ENCODE measurements at regions of chr4 and their contacts with region 1.

Region 1: GRCh38 chr4:674172-675035 is at the starts of genes ATP5ME and MYL5:
- DNase-seq: peak; percentile 97
- H3K4me3 Mint-ChIP-seq: peak within 1 kb of the TSS; percentile 88
- H3K27ac Mint-ChIP-seq: peak within 1 kb of the TSS; percentile 90
- H3K4me1 Mint-ChIP-seq: peaks cover 7% of the 10 kb centered on the region
- H3K27me3 Mint-ChIP-seq: peaks cover 1% of the 10 kb centered on the region
- total RNA-seq, gene ATP5ME: 217 and 224 TPM in 2 replicates
- total RNA-seq, gene MYL5: 29.7 and 35.0 TPM in 2 replicates

Region 2: DNA sequence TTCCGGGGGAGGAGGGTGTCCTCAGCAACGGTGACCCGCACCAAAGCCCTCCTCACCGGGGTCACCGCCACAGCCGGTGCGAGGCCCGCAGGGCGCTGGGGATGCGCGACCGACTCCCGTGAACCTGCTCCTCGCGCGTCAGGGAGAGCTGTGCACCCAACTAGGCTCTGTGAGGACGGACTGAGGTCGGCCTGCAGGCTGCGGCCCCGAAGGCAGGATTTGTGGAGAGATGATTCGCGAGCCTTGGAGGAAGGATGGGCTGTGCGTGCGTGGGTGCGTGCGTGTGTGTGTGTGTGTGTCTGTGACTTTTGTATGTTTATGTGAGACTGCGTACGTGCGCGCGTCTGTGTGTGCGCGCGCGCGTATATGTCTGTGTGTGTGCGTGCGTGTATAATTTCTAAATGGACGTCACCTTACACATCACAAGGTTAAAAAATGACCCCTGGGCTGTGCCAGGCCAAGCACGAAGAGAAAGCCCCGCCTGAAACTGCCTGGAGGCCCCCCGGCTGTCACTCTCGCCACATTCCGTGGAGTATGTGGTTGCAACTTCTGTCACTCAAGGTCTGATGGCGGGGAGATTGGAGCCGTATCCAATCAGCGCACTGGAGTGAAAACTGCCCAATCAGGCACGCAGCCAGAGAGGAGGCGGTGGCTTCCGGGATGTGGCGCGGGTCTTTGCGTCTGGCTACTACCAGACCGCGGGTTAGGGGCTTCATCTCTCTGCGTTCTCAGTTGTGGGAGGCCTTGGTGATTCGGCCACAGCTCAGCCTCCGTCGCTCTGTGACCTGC is 337.1 kb before region 1 on chr4 and contains the start of gene ZNF141:
- intact Hi-C with region 1: loop called (anchors 1 kb)
- DNase-seq: peak; percentile 90
- H3K4me3 Mint-ChIP-seq: peak within 1 kb of the TSS; percentile 99
- H3K27ac Mint-ChIP-seq: peak within 1 kb of the TSS; percentile 98
- H3K4me1 Mint-ChIP-seq: peaks cover 25% of the 10 kb centered on the region
- H3K27me3 Mint-ChIP-seq: peaks cover 3% of the 10 kb centered on the region
- total RNA-seq, gene ZNF141: 23.4 and 23.7 TPM in 2 replicates

Region 3: GRCh38 chr4:602559-602942 is 71.9 kb before region 1 on chr4:
- intact Hi-C with region 1: loop called (anchors 1 kb)
- DNase-seq: peak; percentile 23
- H3K4me3 Mint-ChIP-seq: no peak overlapping the region
- H3K27ac Mint-ChIP-seq: no peak overlapping the region
- H3K4me1 Mint-ChIP-seq: peaks cover 7% of the 10 kb centered on the region
- H3K27me3 Mint-ChIP-seq: peaks cover 3% of the 10 kb centered on the region

Region 4: DNA sequence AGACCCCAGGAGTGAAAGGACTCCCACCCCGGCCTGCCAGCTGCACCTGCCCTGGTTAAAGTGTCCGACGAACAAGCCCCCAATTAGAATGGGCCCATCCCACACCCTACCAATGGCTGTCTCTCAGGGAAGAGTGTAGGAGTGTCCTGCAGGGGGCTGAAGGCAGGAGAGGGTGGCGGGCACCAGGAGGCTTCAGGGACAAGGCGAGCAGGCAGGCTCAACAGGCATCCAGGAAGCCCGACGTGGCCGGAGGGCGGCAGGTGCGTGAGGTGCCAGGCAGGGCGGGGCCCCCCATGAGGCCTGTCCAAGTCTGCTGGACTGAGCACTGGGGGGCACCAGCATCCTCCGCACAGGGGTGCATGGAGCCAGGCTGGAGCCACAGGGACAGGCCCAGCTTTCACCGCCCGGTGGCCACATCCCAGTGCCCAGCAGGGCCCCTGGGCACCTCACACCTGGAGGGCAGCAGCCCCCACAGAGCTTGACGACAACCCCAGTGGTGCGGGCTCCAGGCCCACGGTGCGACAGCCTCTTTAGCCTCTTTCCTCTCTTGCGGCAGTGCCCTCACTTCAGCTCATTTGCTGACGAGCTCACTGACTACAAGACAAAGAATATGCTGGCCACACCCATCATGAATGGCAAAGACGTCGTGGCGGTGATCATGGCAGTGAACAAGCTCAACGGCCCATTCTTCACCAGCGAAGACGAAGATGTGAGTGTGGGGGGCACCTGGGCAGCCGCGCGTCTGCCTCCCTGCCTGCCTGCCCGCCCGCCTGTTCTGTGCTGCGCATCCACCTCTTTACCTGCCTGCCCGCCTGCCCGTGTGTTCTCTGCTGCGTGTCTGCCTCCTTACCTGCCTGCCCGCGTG is 40.1 kb before region 1 on chr4:
- intact Hi-C with region 1: no loop called
- DNase-seq: no peak
- H3K4me3 Mint-ChIP-seq: no peak overlapping the region
- H3K27ac Mint-ChIP-seq: no peak overlapping the region
- H3K4me1 Mint-ChIP-seq: no peaks in the 10 kb centered on the region
- H3K27me3 Mint-ChIP-seq: no peaks in the 10 kb centered on the region

Region 5: GRCh38 chr4:705278-706082 is 31.1 kb after region 1 on chr4 and contains the start of gene PCGF3:
- intact Hi-C with region 1: loop called (anchors 1 kb)
- DNase-seq: peak; percentile 95
- H3K4me3 Mint-ChIP-seq: peak within 1 kb of the TSS; percentile 83
- H3K27ac Mint-ChIP-seq: peak within 1 kb of the TSS; percentile 83
- H3K4me1 Mint-ChIP-seq: peaks cover 27% of the 10 kb centered on the region
- H3K27me3 Mint-ChIP-seq: peaks cover 2% of the 10 kb centered on the region
- total RNA-seq, gene PCGF3: 30.4 and 31.0 TPM in 2 replicates

Measured in activated T-helper 1 cell treated with anti-CD3 and anti-CD28 coated beads, Interleukin-12 subunit alpha, Interleukin-12 subunit beta, Interleukin-2, Interleukin-4 antibody, amounts not matched to agents 30 ng/mL and 10 ng/mL and 1 ng/mL, durations not matched to agents 14 hours and 24 hours and 36 hours (primary cell).